BJ (cell line): ENCODE measurements at regions of chr3 and their contacts with region 1.

Region 1: GRCh38 chr3:17810759-17811158 is 68.3 kb upstream of the TBC1D5 start:
- DNase-seq: peak; percentile 38
- H3K4me3 ChIP-seq: no peak overlapping the region
- H3K27me3 ChIP-seq: no peaks in the 10 kb centered on the region
- CTCF ChIP-seq: peak; percentile 52

Region 2: GRCh38 chr3:17238032-17238431 is 572.7 kb before region 1 on chr3:
- CTCF ChIA-PET with region 1: no interaction called
- POLR2A ChIA-PET with region 1: interaction called, 11 read pairs
- DNase-seq: no peak
- H3K4me3 ChIP-seq: no peak overlapping the region
- H3K27me3 ChIP-seq: no peaks in the 10 kb centered on the region
- CTCF ChIP-seq: no peak

Region 3: GRCh38 chr3:17782751-17783150 is 28.0 kb before region 1 on chr3:
- CTCF ChIA-PET with region 1: no interaction called
- POLR2A ChIA-PET with region 1: interaction called, 12 read pairs
- DNase-seq: no peak
- H3K4me3 ChIP-seq: no peak overlapping the region
- H3K27me3 ChIP-seq: no peaks in the 10 kb centered on the region
- CTCF ChIP-seq: no peak